ENCODE measurements at regions of chr2 and their contacts with region 1.

Region 1: DNA sequence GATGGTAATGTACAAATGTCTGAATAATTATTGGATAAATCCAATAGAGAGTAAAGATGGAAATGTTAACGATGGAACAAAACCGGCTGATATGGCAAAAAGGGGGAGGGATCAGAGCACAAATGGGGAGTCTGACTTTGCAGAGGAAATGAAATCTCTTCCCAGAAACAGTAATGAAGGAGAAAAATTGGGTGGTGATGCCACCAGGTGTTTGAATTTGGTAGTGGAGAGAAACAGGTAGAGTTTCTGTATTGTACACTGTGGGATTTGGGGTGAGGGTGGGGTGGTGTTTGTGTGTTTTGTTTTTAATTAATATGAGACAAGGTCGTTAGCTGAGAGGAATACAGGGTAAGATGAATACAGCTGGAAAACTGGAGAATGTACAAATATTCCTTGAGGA is 20.4 kb upstream of the XDH start:
- DNase-seq: peak; percentile 44
- H3K4me3 ChIP-seq: no peak overlapping the region
- H3K27ac ChIP-seq: no peak overlapping the region
- H3K4me1 ChIP-seq: peaks cover 19% of the 10 kb centered on the region
- H3K27me3 ChIP-seq: no peaks in the 10 kb centered on the region
- CTCF ChIP-seq: peak; percentile 59 to 73

Region 2: DNA sequence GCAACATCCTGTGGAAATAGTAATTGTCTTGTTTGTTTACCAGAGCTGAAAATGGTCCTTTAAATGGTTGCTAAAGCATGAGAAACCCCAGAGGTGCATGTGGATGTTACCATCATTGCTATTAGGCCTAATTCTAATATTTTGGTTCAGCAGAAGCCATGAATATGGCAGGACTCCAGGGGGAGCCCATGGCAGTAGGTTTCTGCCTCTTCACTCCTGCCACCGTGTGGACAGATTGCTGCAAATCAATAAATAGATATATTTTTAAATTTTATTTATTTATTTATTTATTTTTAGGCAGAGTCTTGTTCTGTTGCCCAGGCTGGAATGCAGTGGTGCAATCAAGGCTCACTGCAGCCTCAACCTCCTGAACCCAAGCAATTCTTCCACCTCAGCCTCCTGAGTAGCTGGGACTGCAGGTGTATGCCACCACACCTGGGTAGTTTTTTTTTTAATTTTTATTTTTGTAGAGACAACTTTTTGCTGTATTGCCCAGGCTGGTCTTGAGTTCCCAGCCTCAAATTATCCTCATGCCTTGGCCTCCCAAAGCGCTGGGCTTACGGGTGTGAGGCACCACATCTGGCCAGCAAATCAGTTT is 572.8 kb before region 1 on chr2:
- CTCF ChIA-PET with region 1: no interaction called
- dilution Hi-C with region 1: no loop called
- in situ Hi-C with region 1: no loop called
- intact Hi-C with region 1: loop called (anchors 1 kb)
- DNase-seq: peak; percentile 61
- H3K4me3 ChIP-seq: no peak overlapping the region
- H3K27ac ChIP-seq: no peak overlapping the region
- H3K4me1 ChIP-seq: no peaks in the 10 kb centered on the region
- H3K27me3 ChIP-seq: no peaks in the 10 kb centered on the region
- CTCF ChIP-seq: peak; percentile 84 to 89

Region 3: GRCh38 chr2:31233741-31234682 is 200.9 kb before region 1 on chr2 and contains the start of gene EHD3:
- CTCF ChIA-PET with region 1: interaction called, 3 read pairs
- dilution Hi-C with region 1: no loop called
- in situ Hi-C with region 1: loop called in 1 of 2 experiments (anchors 25 kb)
- intact Hi-C with region 1: loop called (anchors 1 kb)
- DNase-seq: peak; percentile 85
- H3K4me3 ChIP-seq: peak within 1 kb of the TSS; percentile 48 to 69 (median 49)
- H3K27ac ChIP-seq: no peak within 1 kb of the TSS
- H3K4me1 ChIP-seq: peaks cover 27% of the 10 kb centered on the region
- H3K27me3 ChIP-seq: no peaks in the 10 kb centered on the region
- CTCF ChIP-seq: peak; percentile 64 to 86
- total RNA-seq, gene EHD3: 39.4 to 53.3 TPM

Region 4: GRCh38 chr2:31384351-31384750 is 50.6 kb before region 1 on chr2:
- CTCF ChIA-PET with region 1: no interaction called
- dilution Hi-C with region 1: no loop called
- in situ Hi-C with region 1: no loop called
- intact Hi-C with region 1: loop called (anchors 1 kb)
- DNase-seq: peak; percentile 95
- H3K4me3 ChIP-seq: no peak overlapping the region
- H3K27ac ChIP-seq: peak overlapping the region; percentile 99
- H3K4me1 ChIP-seq: peaks cover 49% of the 10 kb centered on the region
- H3K27me3 ChIP-seq: no peaks in the 10 kb centered on the region
- CTCF ChIP-seq: no peak

Measured in mammary epithelial cell (primary cell).